ENCODE measurements at regions of chr6 and their contacts with region 1.

Region 1: GRCh38 chr6:38193481-38194281 is 374.2 kb downstream of the ZFAND3 start:
- DNase-seq: no peak
- H3K4me3 ChIP-seq: no peak overlapping the region
- H3K27ac ChIP-seq: no peak overlapping the region
- H3K4me1 ChIP-seq: no peaks in the 10 kb centered on the region
- CTCF ChIP-seq: no peak

Region 2: DNA sequence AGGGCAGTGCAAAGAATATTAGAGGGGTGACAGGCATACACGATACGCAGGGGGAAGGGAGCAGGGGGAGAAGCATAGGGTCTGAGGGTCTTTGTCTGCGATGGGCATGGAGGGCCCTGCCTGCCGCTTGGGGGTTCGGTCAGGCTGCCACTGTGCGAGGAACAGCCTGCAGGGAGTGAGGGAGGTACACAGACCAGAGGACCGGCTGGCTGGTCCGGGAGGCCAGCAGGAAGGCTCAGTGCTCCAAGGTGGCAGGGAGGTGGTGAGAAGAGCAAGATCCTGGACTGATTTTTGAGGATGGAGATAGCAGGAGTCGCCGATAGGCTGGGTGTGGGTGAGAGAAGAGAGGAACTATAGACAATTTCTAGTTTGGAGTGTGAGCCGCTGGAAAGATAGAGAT is 35.8 kb before region 1 on chr6:
- CTCF ChIA-PET with region 1: interaction called, 21 read pairs
- POLR2A ChIA-PET with region 1: no interaction called
- intact Hi-C with region 1: no loop called
- DNase-seq: no peak
- H3K4me3 ChIP-seq: no peak overlapping the region
- H3K27ac ChIP-seq: no peak overlapping the region
- H3K4me1 ChIP-seq: peaks cover 6% of the 10 kb centered on the region
- CTCF ChIP-seq: no peak

Region 3: DNA sequence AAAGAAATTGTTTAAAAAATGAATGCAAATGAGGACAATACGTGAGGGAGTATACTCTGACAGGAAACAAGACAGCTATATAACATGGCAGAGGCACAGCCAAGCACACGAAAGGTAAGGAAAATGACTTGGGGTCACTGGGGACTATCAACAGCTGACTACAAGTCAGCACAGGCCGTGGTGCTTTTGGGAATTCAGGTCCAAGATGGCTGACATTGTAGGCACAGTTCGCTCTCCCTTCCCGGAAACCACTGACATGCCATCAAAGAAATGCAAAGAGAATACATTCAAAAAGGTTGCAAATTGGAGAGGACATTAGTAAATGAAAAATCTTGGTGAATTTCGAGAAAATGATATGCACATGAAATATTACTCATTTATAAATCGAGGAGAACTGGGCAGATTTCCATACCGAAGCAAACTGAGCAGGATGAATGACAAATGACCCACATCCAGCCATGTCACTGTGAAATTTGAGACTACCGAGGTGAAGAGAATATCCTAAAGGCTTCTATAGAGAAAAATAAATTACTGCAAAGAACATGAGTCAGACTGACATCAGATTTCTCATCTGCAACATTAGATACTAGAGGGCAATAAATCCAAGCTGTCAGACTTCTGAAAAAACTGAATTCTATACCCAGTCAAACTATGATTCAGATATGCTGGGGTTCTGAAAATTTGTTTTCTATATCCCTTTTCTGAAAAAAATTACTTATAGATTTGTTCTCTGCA is 55.0 kb after region 1 on chr6:
- CTCF ChIA-PET with region 1: no interaction called
- POLR2A ChIA-PET with region 1: no interaction called
- intact Hi-C with region 1: no loop called
- DNase-seq: no peak
- H3K4me3 ChIP-seq: no peak overlapping the region
- H3K27ac ChIP-seq: no peak overlapping the region
- H3K4me1 ChIP-seq: no peaks in the 10 kb centered on the region
- CTCF ChIP-seq: no peak

Region 4: DNA sequence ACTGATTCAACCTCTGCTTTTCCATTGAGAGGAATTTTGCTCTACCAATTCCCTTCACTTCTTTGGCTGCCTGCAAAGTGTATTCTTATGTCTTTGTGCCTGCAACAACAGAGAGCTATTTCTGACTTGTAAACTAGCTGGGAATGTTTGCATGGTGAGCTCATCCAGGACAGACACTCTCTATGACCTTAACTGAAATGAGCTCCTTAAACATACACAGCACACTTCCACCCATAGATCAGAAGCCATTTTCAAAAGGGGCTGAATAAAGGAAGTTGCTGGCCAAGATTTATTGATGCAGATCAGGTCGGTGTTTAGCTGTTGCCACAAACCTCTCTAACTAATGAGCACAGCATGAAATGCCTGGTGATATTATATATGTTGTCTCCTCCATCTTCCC is 68.3 kb after region 1 on chr6:
- CTCF ChIA-PET with region 1: no interaction called
- POLR2A ChIA-PET with region 1: no interaction called
- intact Hi-C with region 1: no loop called
- DNase-seq: no peak
- H3K4me3 ChIP-seq: no peak overlapping the region
- H3K27ac ChIP-seq: no peak overlapping the region
- H3K4me1 ChIP-seq: no peaks in the 10 kb centered on the region
- CTCF ChIP-seq: no peak